WTC11 (cell line): ENCODE measurements at regions of chr21 and their contacts with region 1.

Region 1: DNA sequence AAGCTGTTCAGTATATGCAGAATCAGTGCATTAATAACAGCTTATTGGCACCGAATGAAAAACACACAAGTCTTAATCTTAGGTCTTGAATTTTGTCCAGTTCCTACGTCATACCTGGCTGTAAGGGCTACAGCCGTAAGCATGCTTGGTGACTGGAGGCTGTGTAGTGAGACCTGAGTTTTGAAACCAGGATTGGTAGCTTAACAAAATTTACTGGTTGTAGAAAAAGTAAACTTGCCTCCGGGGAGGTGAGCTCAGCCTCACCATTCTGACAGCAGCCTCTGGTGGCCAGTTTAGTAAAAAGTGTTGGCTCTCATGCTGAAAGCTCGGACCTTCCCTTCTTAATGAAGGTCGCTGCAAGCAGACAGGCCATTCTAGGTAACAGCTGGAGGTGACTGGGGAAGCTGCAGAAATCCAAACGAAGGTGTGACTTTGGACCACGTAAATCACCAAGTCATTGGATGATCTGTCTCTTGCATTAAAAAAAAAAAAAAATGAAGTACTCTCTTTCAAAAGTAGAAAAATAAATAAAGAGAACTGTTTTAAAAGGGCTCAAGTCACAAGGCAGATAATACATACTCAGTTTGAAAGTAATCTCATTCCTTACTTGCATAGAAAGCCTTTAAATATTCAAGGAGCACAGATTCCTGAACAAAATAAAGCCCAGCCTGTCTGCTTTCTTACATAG is 48.9 kb downstream of the HLCS start:
- DNase-seq: peak; percentile 43
- ATAC-seq: peak; percentile 81
- H3K4me3 Mint-ChIP-seq: no peak overlapping the region
- H3K27ac Mint-ChIP-seq: no peak overlapping the region
- H3K4me1 Mint-ChIP-seq: peaks cover 46% of the 10 kb centered on the region
- H3K27me3 Mint-ChIP-seq: no peaks in the 10 kb centered on the region
- CTCF ChIP-seq: 0 out of 2 replicates have a peak, but pooled peaks have one; percentile 14

Region 2: DNA sequence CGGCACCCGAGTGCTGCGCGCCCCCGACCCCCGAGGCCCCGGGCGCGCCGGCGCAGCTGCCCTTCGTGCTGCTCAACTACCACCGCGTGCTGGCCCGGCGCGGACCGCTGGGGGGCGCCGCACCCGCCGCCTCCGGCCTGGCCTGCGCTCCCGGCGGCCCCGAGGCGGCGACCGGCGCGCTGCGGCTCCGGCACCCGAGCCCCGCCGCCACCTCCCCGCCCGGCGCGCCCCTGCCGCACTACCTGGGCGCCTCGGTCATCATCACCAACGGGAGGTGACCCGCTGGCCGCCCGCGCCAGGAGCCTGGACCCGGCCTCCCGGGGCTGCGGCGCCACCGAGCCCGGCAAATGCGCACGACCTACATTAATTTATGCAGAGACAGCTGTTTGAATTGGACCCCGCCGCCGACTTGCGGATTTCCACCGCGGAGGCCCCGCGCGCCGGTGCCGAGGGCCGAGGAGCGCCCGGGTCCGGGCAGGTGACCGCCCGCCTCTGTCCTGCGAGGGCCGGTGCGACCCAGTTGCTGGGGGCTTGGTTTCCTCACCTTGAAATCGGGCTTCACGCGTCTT is 169.7 kb before region 1 on chr21:
- CTCF ChIA-PET with region 1: interaction called, 15 read pairs
- POLR2A ChIA-PET with region 1: no interaction called
- DNase-seq: peak; percentile 82
- ATAC-seq: peak; percentile 61
- H3K4me3 Mint-ChIP-seq: peak overlapping the region; percentile 70
- H3K27ac Mint-ChIP-seq: no peak overlapping the region
- H3K4me1 Mint-ChIP-seq: peaks cover 52% of the 10 kb centered on the region
- H3K27me3 Mint-ChIP-seq: peaks cover 37% of the 10 kb centered on the region
- CTCF ChIP-seq: no peak

Region 3: DNA sequence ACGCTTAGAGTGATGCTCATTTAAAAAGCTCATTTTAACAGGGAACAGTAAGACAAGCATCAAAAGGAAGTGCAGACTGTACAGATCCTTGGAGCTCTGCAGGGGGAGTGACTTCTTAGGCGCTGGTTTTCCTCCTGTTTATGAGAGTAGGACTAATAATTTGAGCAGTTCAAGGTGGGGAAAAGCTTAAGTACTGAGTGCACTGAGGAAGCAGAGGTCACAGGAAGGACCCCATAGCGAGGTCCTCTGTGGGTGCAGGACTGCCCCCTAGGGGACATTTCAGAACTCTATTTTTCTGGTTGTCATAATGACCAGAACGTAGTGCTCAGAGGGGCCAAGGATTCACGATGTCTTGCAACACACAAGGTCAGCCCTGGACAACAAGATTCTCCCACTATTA is 63.2 kb before region 1 on chr21:
- CTCF ChIA-PET with region 1: interaction called, 22 read pairs
- POLR2A ChIA-PET with region 1: interaction called, 3 read pairs
- DNase-seq: peak; percentile 69
- ATAC-seq: peak; percentile 95
- H3K4me3 Mint-ChIP-seq: no peak overlapping the region
- H3K27ac Mint-ChIP-seq: no peak overlapping the region
- H3K4me1 Mint-ChIP-seq: peaks cover 8% of the 10 kb centered on the region
- H3K27me3 Mint-ChIP-seq: no peaks in the 10 kb centered on the region; the same call in 1 of the 2 replicates
- CTCF ChIP-seq: peak; percentile 67

Region 4: GRCh38 chr21:36873513-36873912 is 44.1 kb before region 1 on chr21:
- CTCF ChIA-PET with region 1: interaction called, 10 read pairs
- POLR2A ChIA-PET with region 1: no interaction called
- DNase-seq: no peak
- ATAC-seq: no peak
- H3K4me3 Mint-ChIP-seq: no peak overlapping the region
- H3K27ac Mint-ChIP-seq: no peak overlapping the region
- H3K4me1 Mint-ChIP-seq: no peaks in the 10 kb centered on the region
- H3K27me3 Mint-ChIP-seq: no peaks in the 10 kb centered on the region
- CTCF ChIP-seq: no peak